ENCODE measurements at regions of chr13 and their contacts with region 1.

Region 1: GRCh38 chr13:108322206-108322824 is 52.8 kb downstream of the TNFSF13B start:
- DNase-seq: peak; percentile 36
- H3K4me3 ChIP-seq: no peak overlapping the region
- H3K27ac ChIP-seq: no peak overlapping the region
- H3K4me1 ChIP-seq: no peaks in the 10 kb centered on the region
- H3K27me3 ChIP-seq: no peaks in the 10 kb centered on the region
- CTCF ChIP-seq: peak; percentile 89
- EP300 ChIP-seq: no peak
- RAD21 ChIP-seq: peak; percentile 80

Region 2: GRCh38 chr13:108342369-108343289 is 20.3 kb after region 1 on chr13:
- CTCF ChIA-PET with region 1: interaction called, 12 read pairs
- POLR2A ChIA-PET with region 1: no interaction called
- DNase-seq: peak; percentile 23
- H3K4me3 ChIP-seq: no peak overlapping the region; a peak in 1 of 4 replicates
- H3K27ac ChIP-seq: no peak overlapping the region
- H3K4me1 ChIP-seq: no peaks in the 10 kb centered on the region
- H3K27me3 ChIP-seq: peaks cover 7% of the 10 kb centered on the region; the same call in 1 of the 2 replicates
- CTCF ChIP-seq: peak; percentile 65
- EP300 ChIP-seq: no peak
- RAD21 ChIP-seq: peak; percentile 64

Region 3: DNA sequence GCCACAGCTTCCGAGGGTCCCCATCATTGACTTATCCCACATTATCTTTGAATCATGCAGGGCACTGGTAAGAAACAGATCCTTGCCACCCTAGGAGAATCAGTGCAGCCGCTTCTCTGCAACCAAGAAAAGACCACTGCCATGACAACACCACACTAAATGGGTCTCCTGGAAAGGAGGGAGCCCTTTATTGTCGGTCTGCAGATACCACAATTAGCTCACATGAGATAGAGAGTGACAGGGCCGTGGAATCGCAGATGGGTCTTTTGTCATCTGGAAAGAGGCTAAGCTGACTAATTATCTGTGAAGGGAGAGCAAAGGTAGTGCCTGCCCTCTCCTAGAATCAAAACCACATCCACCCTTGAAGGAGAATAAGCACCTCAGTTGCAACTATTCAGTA is 128.8 kb after region 1 on chr13:
- CTCF ChIA-PET with region 1: no interaction called
- POLR2A ChIA-PET with region 1: no interaction called
- DNase-seq: no peak
- H3K4me3 ChIP-seq: no peak overlapping the region
- H3K27ac ChIP-seq: no peak overlapping the region
- H3K4me1 ChIP-seq: no peaks in the 10 kb centered on the region
- H3K27me3 ChIP-seq: no peaks in the 10 kb centered on the region; the same call in 1 of the 2 replicates
- CTCF ChIP-seq: no peak
- EP300 ChIP-seq: no peak
- RAD21 ChIP-seq: no peak

Measured in SK-N-SH (cell line).